Activated T-helper 1 cell treated with anti-CD3 and anti-CD28 coated beads, Interleukin-12 subunit alpha, Interleukin-12 subunit beta, Interleukin-2, Interleukin-4 antibody, amounts not matched to agents 30 ng/mL and 10 ng/mL and 1 ng/mL, durations not matched to agents 14 hours and 24 hours and 36 hours (primary cell): ENCODE measurements at regions of chr2 and their contacts with region 1.

Region 1: DNA sequence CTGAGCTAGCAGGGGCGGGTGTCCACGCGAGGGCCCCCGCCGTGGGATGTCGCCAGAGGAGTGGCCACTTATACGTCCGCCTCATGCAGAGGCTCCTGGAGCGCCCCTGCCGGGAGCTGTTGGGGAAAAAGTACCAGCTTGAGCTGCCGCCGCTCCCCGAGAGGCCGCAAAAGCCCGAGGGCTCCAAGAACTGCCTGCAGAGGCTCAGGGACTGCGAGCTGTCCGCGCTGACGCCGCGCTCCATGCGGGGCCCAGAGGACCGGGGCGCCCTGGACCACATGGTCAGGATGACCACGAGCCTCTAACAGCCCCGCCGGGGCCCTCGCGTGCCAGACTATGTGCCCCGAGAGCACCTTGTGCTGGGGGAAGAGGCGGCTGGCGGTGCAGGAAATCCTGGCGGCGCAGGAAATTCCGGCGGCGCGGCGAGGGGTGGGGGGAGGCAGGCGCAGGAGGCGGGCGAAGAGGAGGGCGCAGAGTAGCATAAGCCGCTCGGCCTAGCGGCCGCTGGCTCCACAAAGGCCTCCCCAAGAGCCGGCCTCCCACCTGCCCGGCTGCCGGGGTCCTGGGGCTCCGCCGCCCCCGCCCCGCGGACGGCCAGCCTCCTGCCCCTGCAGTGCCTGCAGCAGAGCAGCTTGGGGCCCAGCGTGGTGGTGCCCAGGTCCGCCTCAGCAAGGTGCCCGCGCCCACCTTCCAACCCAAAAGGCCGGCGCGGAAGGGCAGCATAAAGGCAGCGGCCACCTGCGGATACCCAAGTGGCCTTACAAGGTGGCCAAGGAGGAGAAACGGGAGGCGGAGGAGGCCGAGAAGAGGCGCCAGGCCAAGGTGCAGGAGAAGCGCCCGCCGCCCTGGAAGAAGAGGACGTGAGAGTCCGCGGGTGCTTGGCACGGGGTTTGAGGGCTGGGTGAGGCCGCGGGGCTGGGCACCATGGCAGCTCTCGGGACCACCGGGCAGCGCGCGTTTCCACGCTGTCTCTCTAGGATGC is 42.1 kb upstream of the TRIM43B start:
- DNase-seq: peak; percentile 61
- H3K4me3 Mint-ChIP-seq: peak overlapping the region; percentile 91
- H3K27ac Mint-ChIP-seq: peak overlapping the region; percentile 92
- H3K4me1 Mint-ChIP-seq: peaks cover 31% of the 10 kb centered on the region
- H3K27me3 Mint-ChIP-seq: peaks cover 7% of the 10 kb centered on the region

Region 2: GRCh38 chr2:95179451-95179850 is 347.2 kb before region 1 on chr2:
- intact Hi-C with region 1: no loop called
- DNase-seq: no peak
- H3K4me3 Mint-ChIP-seq: no peak overlapping the region
- H3K27ac Mint-ChIP-seq: no peak overlapping the region
- H3K4me1 Mint-ChIP-seq: no peaks in the 10 kb centered on the region
- H3K27me3 Mint-ChIP-seq: no peaks in the 10 kb centered on the region

Region 3: GRCh38 chr2:95231723-95232122 is 294.9 kb before region 1 on chr2:
- intact Hi-C with region 1: no loop called
- DNase-seq: no peak
- H3K4me3 Mint-ChIP-seq: no peak overlapping the region
- H3K27ac Mint-ChIP-seq: no peak overlapping the region
- H3K4me1 Mint-ChIP-seq: no peaks in the 10 kb centered on the region
- H3K27me3 Mint-ChIP-seq: no peaks in the 10 kb centered on the region

Region 4: GRCh38 chr2:95359031-95359430 is 167.6 kb before region 1 on chr2:
- intact Hi-C with region 1: no loop called
- DNase-seq: no peak
- H3K4me3 Mint-ChIP-seq: no peak overlapping the region
- H3K27ac Mint-ChIP-seq: no peak overlapping the region
- H3K4me1 Mint-ChIP-seq: no peaks in the 10 kb centered on the region
- H3K27me3 Mint-ChIP-seq: peaks cover 6% of the 10 kb centered on the region

Region 5: DNA sequence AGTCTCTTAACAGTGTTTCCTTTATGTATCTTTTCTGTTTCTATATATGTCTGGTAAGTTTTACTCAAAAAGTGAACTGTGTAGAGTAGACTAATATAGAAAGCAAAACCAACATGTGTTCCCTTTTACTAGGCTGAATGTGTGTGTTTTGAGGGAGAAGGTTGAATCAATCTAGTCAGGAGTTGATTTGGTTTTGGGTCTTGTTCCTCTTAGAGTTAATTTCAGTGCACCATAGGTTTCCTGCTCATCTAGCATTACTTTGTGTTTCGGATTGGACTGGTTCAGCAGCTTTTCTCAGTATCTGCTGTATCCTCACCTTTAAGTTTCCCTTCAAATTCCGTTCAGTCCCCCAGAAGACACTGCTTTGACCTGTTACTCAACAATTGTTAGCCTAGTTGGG is 13.2 kb after region 1 on chr2:
- intact Hi-C with region 1: loop called (anchors 1 kb)
- DNase-seq: no peak
- H3K4me3 Mint-ChIP-seq: no peak overlapping the region
- H3K27ac Mint-ChIP-seq: peak overlapping the region; percentile 69
- H3K4me1 Mint-ChIP-seq: peaks cover 22% of the 10 kb centered on the region
- H3K27me3 Mint-ChIP-seq: peaks cover 3% of the 10 kb centered on the region

Region 6: GRCh38 chr2:96157651-96158553 is 631.3 kb after region 1 on chr2:
- intact Hi-C with region 1: loop called (anchors 5 kb)
- DNase-seq: peak; percentile 74
- H3K4me3 Mint-ChIP-seq: peak overlapping the region; percentile 65
- H3K27ac Mint-ChIP-seq: peak overlapping the region; percentile 87
- H3K4me1 Mint-ChIP-seq: peaks cover 74% of the 10 kb centered on the region
- H3K27me3 Mint-ChIP-seq: no peaks in the 10 kb centered on the region